Sciatic nerve (tissue), 2 donors: ENCODE measurements at regions of chr2 and their contacts with region 1.

Region 1: GRCh38 chr2:197804049-197804757 is at the start of gene PLCL1:
- DNase-seq: peak; percentile 90
- ATAC-seq: peak; percentile 95
- total RNA-seq, gene PLCL1: 6.7 TPM

Region 2: GRCh38 chr2:198296665-198297308 is 492.6 kb after region 1 on chr2:
- intact Hi-C with region 1: loop called (anchors 5 kb)
- DNase-seq: peak; percentile 62
- ATAC-seq: peak; percentile 81